ENCODE measurements at regions of chr19 and their contacts with region 1.

Region 1: GRCh38 chr19:7799640-7800355 is 30.2 kb upstream of the EVI5L start:
- DNase-seq: peak; percentile 67
- ATAC-seq: peak; percentile 68
- H3K4me3 Mint-ChIP-seq: peak overlapping the region; percentile 27
- H3K27ac Mint-ChIP-seq: no peak overlapping the region
- H3K4me1 Mint-ChIP-seq: peaks cover 7% of the 10 kb centered on the region
- H3K27me3 Mint-ChIP-seq: peaks cover 42% of the 10 kb centered on the region
- CTCF ChIP-seq: peak; percentile 82

Region 2: DNA sequence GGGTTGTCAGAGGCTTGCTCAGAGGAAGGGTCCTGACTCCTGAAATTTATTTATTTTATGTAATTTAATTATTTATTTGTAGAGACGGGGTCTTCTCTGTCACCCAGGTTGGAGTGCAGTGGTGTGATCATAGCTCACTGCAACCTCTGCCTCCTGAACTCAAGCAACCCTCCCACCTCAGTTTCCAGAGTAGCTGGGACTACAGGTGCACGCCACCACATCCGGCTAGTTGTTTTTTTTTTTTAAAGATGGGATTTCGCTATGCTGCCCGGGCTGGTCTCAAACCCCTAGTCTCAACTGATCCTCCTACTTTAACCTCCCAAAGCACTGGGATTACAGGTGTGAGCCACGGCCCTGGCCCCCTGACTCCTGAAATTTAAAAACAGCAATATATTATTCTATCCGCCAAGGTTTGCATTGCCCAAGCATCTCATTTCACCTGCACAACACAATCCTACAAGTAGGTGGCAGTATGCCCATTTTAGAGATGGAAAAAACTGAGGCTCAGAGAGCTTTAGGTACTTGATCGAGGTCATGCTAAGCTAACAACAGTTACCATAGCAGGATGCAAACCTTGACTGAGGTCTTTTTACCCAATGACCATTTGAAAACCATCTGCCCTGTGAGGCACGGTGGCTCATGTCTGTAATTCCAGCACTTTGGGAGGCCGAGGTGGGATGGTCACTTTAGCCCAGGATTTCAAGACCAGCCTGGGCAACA is 432.9 kb before region 1 on chr19:
- CTCF ChIA-PET with region 1: interaction called, 4 read pairs
- POLR2A ChIA-PET with region 1: no interaction called
- intact Hi-C with region 1: loop called (anchors 10 kb)
- DNase-seq: peak; percentile 57
- ATAC-seq: peak; percentile 90
- H3K4me3 Mint-ChIP-seq: no peak overlapping the region
- H3K27ac Mint-ChIP-seq: peak overlapping the region; percentile 73
- H3K4me1 Mint-ChIP-seq: peaks cover 22% of the 10 kb centered on the region
- H3K27me3 Mint-ChIP-seq: no peaks in the 10 kb centered on the region
- CTCF ChIP-seq: peak; percentile 79

Region 3: GRCh38 chr19:7652061-7652641 is 147.6 kb before region 1 on chr19:
- CTCF ChIA-PET with region 1: interaction called, 16 read pairs
- POLR2A ChIA-PET with region 1: no interaction called
- intact Hi-C with region 1: loop called (anchors 5 kb)
- DNase-seq: peak; percentile 91
- ATAC-seq: peak; percentile 86
- H3K4me3 Mint-ChIP-seq: peak overlapping the region; percentile 59
- H3K27ac Mint-ChIP-seq: peak overlapping the region; percentile 53
- H3K4me1 Mint-ChIP-seq: peaks cover 24% of the 10 kb centered on the region
- H3K27me3 Mint-ChIP-seq: no peaks in the 10 kb centered on the region
- CTCF ChIP-seq: peak; percentile 99

Region 4: DNA sequence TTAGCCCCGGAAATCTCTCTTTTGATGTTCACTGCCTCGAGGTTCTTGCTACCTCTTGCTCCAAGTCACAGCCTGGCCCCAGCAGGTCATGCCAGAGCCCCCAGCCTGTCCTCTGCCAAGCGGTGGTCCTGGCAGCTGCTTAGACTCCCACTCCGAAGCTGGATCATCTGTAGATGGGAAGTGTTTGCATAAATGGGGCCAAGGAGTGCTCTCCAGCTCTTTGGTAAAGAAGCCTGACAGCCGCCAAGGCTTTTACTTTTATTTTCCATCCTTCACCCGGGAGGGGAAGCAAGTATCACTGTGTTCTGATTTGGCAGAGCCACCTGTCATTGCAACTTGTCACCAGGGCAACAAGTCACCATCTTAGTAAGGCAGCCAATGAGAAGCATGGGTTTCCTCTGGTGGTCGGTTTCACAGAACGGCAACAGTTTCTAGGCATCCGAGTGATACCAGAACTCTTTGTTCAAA is 141.5 kb before region 1 on chr19:
- CTCF ChIA-PET with region 1: interaction called, 10 read pairs
- POLR2A ChIA-PET with region 1: interaction called, 3 read pairs
- intact Hi-C with region 1: loop called (anchors 5 kb)
- DNase-seq: peak; percentile 78
- ATAC-seq: peak; percentile 80
- H3K4me3 Mint-ChIP-seq: peak overlapping the region; percentile 68
- H3K27ac Mint-ChIP-seq: peak overlapping the region; percentile 78
- H3K4me1 Mint-ChIP-seq: peaks cover 30% of the 10 kb centered on the region
- H3K27me3 Mint-ChIP-seq: peaks cover 2% of the 10 kb centered on the region
- CTCF ChIP-seq: no peak

Region 5: GRCh38 chr19:7748770-7749209 is 51.0 kb before region 1 on chr19:
- CTCF ChIA-PET with region 1: interaction called, 6 read pairs
- POLR2A ChIA-PET with region 1: no interaction called
- intact Hi-C with region 1: loop called (anchors 10 kb)
- DNase-seq: peak; percentile 33
- ATAC-seq: no peak
- H3K4me3 Mint-ChIP-seq: no peak overlapping the region
- H3K27ac Mint-ChIP-seq: no peak overlapping the region
- H3K4me1 Mint-ChIP-seq: peaks cover 29% of the 10 kb centered on the region
- H3K27me3 Mint-ChIP-seq: peaks cover 20% of the 10 kb centered on the region
- CTCF ChIP-seq: no peak

Region 6: GRCh38 chr19:7811989-7812388 is 12.2 kb after region 1 on chr19:
- CTCF ChIA-PET with region 1: interaction called, 10 read pairs
- POLR2A ChIA-PET with region 1: no interaction called
- intact Hi-C with region 1: no loop called
- DNase-seq: no peak
- ATAC-seq: no peak
- H3K4me3 Mint-ChIP-seq: no peak overlapping the region
- H3K27ac Mint-ChIP-seq: no peak overlapping the region
- H3K4me1 Mint-ChIP-seq: peaks cover 21% of the 10 kb centered on the region
- H3K27me3 Mint-ChIP-seq: peaks cover 18% of the 10 kb centered on the region
- CTCF ChIP-seq: no peak